AG04449 (cell line): ENCODE measurements at regions of chr5 and their contacts with region 1.

Region 1: GRCh38 chr5:135950611-135951010 is 4.2 kb downstream of the LECT2 start:
- DNase-seq: peak; percentile 33
- H3K4me3 ChIP-seq: no peak overlapping the region
- CTCF ChIP-seq: no peak

Region 2: DNA sequence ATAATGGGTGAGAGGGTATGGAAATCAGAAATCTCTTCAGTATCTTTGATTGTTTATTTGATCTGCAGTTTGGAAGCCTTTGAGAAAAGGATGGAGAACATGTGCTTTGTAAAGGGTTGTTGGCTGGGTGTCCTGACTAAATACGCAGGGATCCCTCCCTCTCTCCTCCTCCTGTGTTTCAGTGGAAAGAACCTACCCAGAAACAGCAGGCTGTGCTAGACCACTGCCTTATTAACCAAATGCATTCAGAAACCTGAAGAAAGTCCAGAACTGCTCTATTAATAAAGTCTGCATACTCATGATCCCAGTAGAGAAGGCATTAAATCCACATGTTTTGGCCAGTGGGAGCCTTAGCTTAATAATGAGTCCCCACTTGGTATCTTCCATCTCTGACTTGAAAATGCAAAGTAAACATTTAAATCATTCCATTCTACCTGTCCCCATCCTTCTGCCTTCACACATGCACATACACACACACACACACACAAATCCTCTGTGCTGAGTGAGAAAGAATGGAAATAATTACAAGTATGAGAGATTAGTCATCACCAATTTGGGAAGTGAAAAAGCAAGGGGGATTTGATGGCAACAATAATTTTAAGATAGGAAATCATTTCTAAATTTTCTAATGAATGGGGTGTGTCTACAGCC is 14.2 kb after region 1 on chr5:
- CTCF ChIA-PET with region 1: interaction called, 16 read pairs
- POLR2A ChIA-PET with region 1: no interaction called
- DNase-seq: no peak
- H3K4me3 ChIP-seq: no peak overlapping the region
- CTCF ChIP-seq: no peak

Region 3: GRCh38 chr5:136155761-136156160 is 205.2 kb after region 1 on chr5:
- CTCF ChIA-PET with region 1: no interaction called
- POLR2A ChIA-PET with region 1: no interaction called
- DNase-seq: no peak
- H3K4me3 ChIP-seq: no peak overlapping the region
- CTCF ChIP-seq: no peak

Region 4: GRCh38 chr5:136466041-136466415 is 515.4 kb after region 1 on chr5:
- CTCF ChIA-PET with region 1: no interaction called
- POLR2A ChIA-PET with region 1: no interaction called
- DNase-seq: no peak
- H3K4me3 ChIP-seq: peak overlapping the region; percentile 47
- CTCF ChIP-seq: no peak